GM10248 (cell line): ENCODE measurements at regions of chr13 and their contacts with region 1.

Region 1: DNA sequence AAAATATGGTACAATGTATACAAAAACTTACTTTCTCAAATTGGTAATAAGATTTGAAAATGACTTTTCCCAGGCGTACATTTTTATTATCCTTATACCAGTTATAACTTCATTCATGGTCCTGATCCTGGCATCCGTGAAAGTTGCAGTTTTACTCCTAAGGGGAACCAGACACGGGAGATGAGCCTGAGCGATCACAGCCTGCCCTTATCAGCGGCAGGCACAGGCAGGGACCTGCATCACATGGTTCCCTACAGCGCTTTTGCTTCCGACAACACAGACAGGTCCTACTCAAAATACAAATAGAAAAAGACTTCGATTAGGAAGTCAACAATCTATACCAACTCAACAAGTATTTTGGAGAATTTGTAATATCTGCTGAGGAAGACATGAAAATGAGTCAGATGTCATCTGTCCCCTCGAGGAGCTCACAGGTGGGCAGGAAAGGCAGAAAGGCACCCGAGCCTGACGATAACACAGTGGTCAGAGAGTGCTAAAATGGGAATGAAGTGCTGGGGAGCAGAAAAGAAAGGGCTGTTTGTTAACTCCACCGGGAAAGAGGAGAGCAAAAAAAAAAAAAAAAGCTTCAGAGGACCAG is 93.4 kb downstream of the ABCC4 start:
- DNase-seq: peak; percentile 28
- CTCF ChIP-seq: no peak

Region 2: DNA sequence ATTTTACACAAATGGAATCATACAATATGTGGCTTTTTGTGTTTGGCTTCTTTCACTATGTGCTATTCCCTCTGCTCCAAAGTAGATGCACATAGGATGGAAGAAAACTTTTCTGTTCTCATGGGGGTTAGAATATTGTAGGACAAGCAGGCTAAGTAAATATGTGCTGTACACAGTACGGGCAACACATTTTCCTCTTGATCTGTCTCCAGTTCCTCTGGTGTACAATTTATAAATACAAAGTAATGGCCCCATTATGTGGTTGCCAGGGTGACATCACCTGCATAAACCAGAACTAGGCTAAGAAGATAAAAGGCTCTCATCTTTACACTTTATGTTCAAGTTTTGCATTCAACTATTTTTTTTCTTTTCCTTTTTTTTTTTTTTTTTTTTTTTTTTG is 454.5 kb before region 1 on chr13:
- CTCF ChIA-PET with region 1: no interaction called
- POLR2A ChIA-PET with region 1: no interaction called
- DNase-seq: no peak
- CTCF ChIP-seq: no peak

Region 3: DNA sequence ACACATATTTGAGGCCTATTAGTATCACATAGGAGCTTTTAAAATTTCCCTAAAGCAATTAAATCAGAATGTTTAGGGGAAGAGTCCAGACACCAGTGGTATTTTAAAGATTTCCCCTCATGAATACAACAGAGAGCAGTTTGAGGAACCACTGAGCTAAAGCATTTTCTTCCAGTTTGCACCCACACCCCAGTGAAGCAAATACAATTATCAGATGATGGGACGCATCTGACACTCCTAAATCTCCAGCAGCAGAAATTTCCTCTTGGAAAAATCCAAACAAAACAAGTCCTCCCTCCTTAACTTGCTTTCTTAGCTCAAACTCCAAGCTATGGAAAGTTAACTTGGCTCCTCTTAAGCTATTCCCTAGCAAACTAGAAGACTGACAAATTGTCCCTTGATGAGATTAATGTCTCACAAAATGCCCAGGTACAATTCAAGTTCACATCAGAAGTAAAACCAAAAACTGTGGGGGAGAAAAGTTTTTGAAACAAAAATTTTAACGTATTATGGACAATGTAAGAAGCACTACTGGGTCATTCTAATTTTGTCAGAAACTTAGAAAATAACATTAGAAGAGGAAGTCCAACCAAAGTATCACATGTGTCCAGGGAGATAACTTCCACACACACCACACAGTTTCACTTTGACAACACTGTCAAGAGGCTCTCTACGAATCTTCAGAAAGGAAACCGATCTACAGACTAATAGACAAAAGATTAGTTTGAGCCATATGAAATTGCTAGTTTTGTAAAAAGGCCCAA is 19.2 kb after region 1 on chr13:
- CTCF ChIA-PET with region 1: interaction called, 11 read pairs
- POLR2A ChIA-PET with region 1: no interaction called
- DNase-seq: peak; percentile 69
- CTCF ChIP-seq: no peak

Region 4: GRCh38 chr13:95552539-95553441 is 344.9 kb after region 1 on chr13 and contains the start of gene CLDN10:
- CTCF ChIA-PET with region 1: no interaction called
- POLR2A ChIA-PET with region 1: no interaction called
- DNase-seq: peak; percentile 29
- CTCF ChIP-seq: no peak

Region 5: GRCh38 chr13:95723438-95723837 is 515.6 kb after region 1 on chr13:
- CTCF ChIA-PET with region 1: no interaction called
- POLR2A ChIA-PET with region 1: no interaction called
- DNase-seq: no peak
- CTCF ChIP-seq: no peak